Sciatic nerve (tissue), 2 donors: ENCODE measurements at regions of chr15 and their contacts with region 1.

Region 1: DNA sequence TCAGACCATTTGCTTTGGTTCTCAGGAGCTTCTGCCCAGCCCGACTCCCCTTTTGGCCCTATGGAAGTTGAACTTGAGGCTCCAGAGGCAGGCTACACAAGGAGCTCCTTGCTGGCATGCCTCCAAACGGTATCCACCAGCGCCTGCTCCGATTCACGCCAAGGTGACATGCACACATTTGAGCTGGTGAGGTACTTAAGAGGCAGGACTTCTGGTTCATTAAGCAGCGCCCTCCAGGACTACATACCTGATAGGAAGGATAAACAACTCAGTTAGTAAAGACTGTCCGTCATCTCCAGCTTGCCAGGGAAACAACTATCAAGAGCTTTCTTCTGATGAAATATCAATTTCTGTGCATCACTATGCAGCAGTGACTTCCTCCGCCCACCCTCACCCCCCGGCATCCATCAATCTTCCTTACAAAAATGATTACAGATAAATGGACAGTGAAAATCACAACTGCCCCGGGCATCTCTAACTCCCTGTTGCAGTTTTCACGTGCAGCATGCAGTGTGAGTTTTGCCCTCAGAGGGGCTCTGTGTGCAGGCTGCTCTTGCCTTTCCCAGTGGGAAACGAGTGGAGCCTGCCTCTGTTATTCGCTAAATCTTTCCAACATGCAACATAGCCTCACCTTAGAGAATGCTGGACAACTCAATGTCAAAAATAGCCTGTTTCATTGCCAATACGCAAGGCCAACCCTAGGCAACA is 122.9 kb downstream of the ARRDC4 start:
- DNase-seq: no peak
- ATAC-seq: no peak

Region 2: DNA sequence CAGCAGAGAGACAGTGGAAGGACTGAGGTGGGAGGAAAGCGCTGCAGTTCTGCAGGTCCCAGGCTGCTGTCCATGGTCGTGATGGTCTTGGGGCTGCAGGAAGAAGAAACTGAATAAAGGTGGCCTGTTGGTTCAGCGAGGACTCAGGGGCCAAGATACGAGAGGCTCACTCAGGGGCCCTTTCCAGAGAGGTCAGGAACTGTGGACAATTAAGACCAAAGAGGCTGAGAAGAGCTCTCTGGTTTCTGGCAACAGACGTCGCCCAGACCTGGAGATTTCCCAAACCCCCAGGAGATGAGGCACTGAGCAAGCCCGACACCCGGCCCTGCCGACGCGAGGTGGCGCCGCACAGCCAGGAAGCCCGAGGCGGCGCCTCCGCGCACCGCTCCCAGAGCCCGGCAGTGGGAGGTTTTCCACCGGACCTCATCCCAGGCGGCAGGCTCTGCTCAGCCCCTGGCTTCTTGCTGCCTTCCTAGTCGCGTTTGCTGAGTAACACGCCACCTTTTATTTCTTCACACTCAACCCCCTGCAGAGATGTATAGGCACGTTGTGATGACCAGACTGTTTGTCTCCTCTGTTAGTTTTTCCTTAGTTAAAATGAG is 179.3 kb before region 1 on chr15:
- intact Hi-C with region 1: loop called (anchors 5 kb)
- DNase-seq: peak; percentile 88
- ATAC-seq: peak; percentile 96